Activated CD4-positive, alpha-beta memory T cell treated with anti-CD3 and anti-CD28 coated beads, Interleukin-2, amount 10 ng/mL, durations not matched to agents 7 days and 5 days (primary cell): ENCODE measurements at regions of chr4 and their contacts with region 1.

Region 1: GRCh38 chr4:72326692-72327632 is 242.1 kb downstream of the ADAMTS3 start:
- DNase-seq: no peak
- H3K4me3 Mint-ChIP-seq: no peak overlapping the region
- H3K27ac Mint-ChIP-seq: no peak overlapping the region
- H3K4me1 Mint-ChIP-seq: no peaks in the 10 kb centered on the region
- H3K27me3 Mint-ChIP-seq: peaks cover 3% of the 10 kb centered on the region

Region 2: GRCh38 chr4:72302981-72303704 is 23.8 kb before region 1 on chr4:
- CTCF ChIA-PET with region 1: interaction called, 13 read pairs
- POLR2A ChIA-PET with region 1: no interaction called
- DNase-seq: peak; percentile 28
- H3K4me3 Mint-ChIP-seq: no peak overlapping the region
- H3K27ac Mint-ChIP-seq: no peak overlapping the region
- H3K4me1 Mint-ChIP-seq: no peaks in the 10 kb centered on the region
- H3K27me3 Mint-ChIP-seq: peaks cover 1% of the 10 kb centered on the region